ENCODE measurements at regions of chr15 and their contacts with region 1.

Region 1: DNA sequence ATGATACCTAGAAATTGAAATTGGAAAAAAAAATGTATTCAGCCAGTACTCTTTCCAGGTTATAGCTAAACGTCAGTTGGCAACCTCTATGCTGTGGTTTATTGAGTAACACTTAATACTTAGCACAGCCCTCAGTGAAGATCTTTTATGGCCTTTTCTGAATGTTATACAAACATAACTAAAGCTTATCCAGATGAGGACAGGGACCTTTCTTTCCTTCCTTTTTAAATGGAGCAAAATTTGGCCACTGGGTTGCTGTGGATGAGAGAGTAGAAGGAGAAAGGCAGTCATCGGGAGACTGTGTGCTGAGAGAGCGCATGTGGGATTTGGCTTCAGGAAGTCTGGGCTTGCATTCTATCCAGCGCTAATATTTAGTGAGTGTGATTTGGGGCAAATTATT is 36.1 kb downstream of the IGF1R start:
- DNase-seq: peak; percentile 72
- H3K4me3 Mint-ChIP-seq: peak overlapping the region; percentile 53
- H3K27ac Mint-ChIP-seq: peak overlapping the region; percentile 95
- H3K4me1 Mint-ChIP-seq: peaks cover 59% of the 10 kb centered on the region
- H3K27me3 Mint-ChIP-seq: no peaks in the 10 kb centered on the region
- CTCF ChIP-seq: no peak

Region 2: GRCh38 chr15:98658831-98659699 is 25.4 kb before region 1 on chr15:
- CTCF ChIA-PET with region 1: interaction called, 6 read pairs
- POLR2A ChIA-PET with region 1: interaction called, 16 read pairs
- intact Hi-C with region 1: no loop called
- DNase-seq: peak; percentile 76
- H3K4me3 Mint-ChIP-seq: no peak overlapping the region
- H3K27ac Mint-ChIP-seq: peak overlapping the region; percentile 3
- H3K4me1 Mint-ChIP-seq: peaks cover 44% of the 10 kb centered on the region
- H3K27me3 Mint-ChIP-seq: no peaks in the 10 kb centered on the region
- CTCF ChIP-seq: peak; percentile 69

Region 3: GRCh38 chr15:98668566-98669308 is 15.7 kb before region 1 on chr15:
- CTCF ChIA-PET with region 1: interaction called, 4 read pairs
- POLR2A ChIA-PET with region 1: interaction called, 27 read pairs
- intact Hi-C with region 1: no loop called
- DNase-seq: peak; percentile 76
- H3K4me3 Mint-ChIP-seq: peak overlapping the region; percentile 17
- H3K27ac Mint-ChIP-seq: peak overlapping the region; percentile 60
- H3K4me1 Mint-ChIP-seq: peaks cover 47% of the 10 kb centered on the region
- H3K27me3 Mint-ChIP-seq: no peaks in the 10 kb centered on the region
- CTCF ChIP-seq: no peak

Region 4: DNA sequence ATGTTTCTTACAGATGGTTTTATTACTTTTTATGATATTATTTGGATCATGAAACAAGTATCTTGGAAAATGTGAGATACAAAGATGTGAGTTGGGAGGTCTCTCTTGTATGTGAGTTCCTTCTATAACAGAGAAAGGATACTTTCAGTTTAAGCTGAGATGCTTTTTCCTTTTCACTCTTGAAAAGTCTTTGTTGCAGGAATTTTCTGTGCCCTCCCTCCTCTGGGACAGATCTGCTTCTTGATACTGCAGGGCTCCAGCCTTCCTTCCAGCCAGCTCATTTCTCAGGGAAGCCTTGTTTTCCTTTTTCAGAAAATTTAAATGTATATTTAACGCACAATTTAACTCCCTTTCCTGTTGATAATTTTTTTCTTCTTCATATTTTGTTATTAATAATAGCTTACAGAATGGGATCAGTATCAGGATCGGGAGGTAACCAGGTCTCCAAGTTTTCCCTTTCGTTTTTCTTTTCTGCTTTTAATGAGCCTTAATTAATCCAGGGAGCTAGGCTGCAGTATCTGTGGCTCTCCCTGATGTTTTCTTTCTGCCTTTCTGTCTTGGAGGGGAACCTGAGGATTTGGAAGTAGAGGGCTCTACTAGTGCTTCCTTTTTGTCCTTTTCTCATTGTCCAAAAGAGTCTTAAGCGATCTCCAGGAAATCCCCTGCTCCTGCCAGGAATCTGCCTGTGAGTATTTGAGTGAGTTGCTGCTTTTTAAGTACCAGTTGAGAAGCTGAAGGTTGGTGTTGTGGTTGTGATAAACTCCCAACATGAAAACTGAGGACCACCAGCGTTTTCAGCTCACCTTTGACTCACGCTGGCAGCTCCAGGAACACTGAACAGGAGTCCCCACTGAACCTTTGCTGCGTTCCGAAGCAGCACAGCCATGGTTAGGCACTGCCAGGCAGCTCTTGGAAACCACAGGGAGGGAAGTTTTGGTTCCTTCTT is 69.6 kb after region 1 on chr15:
- CTCF ChIA-PET with region 1: no interaction called
- POLR2A ChIA-PET with region 1: interaction called, 11 read pairs
- intact Hi-C with region 1: no loop called
- DNase-seq: peak; percentile 36
- H3K4me3 Mint-ChIP-seq: peak overlapping the region; percentile 79
- H3K27ac Mint-ChIP-seq: peak overlapping the region; percentile 91
- H3K4me1 Mint-ChIP-seq: no peaks in the 10 kb centered on the region
- H3K27me3 Mint-ChIP-seq: no peaks in the 10 kb centered on the region
- CTCF ChIP-seq: no peak